Spleen (tissue), 13 donors: ENCODE measurements at regions of chr17 and their contacts with region 1.

Region 1: DNA sequence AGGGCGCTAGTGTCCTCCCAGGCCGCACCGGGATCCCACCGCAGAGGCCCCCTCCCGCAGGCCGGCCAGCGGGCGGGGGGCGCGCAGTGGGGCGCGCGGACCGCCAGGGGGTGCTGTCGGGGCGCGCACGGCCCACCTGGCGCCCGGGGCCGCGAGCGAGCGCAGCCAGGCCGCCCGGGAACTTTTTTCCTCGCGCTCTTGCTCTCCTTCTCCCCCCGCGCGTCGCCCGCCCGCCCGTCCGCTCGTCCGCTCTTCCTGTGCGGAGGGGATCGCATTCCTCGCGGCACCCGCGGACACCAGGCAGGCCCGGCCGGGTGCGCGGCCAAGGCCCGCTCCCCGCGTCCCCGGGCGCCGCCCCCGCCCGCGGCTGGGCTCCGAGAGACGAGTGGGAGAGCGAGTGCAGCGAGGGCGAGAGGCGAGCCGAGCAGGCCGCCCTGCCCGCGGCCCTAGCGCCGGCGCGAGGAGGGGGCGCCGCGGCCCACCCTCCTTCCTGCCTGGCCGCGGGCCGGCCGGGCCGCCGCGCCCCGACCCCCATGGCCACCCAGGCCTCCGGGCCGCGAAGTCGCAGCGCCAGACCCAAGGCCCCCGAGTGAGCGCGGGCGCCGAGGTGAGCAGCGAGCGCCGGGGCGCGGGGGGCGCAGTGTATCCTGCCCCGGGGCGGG is at the start of gene RAI1:
- DNase-seq: peak; percentile 94
- H3K4me3 ChIP-seq: peak within 1 kb of the TSS; percentile 66 to 93 (median 81)
- H3K27ac ChIP-seq: peak within 1 kb of the TSS; percentile 90 to 96 (median 94)
- H3K4me1 ChIP-seq: peaks cover 19 to 70% (median 48%) of the 10 kb centered on the region in 6 donors
- H3K27me3 ChIP-seq: no peaks in the 10 kb centered on the region
- CTCF ChIP-seq: peak in 8 of 11 experiments; percentile 46 to 95 (median 84)
- POLR2A ChIP-seq: no peak
- total RNA-seq, gene RAI1: 28.9 to 61.9 (median 40.3) TPM

Region 2: GRCh38 chr17:17723354-17724261 is 42.3 kb after region 1 on chr17:
- intact Hi-C with region 1: loop called (anchors 5 kb)
- DNase-seq: no peak
- H3K4me3 ChIP-seq: peak overlapping the region; percentile 45 to 81 (median 60)
- H3K27ac ChIP-seq: peak overlapping the region; percentile 14 to 88 (median 82)
- H3K4me1 ChIP-seq: peaks cover 29 to 83% (median 64%) of the 10 kb centered on the region in 6 donors
- H3K27me3 ChIP-seq: peaks cover 0 to 39% (median 9%) of the 10 kb centered on the region in 7 donors
- CTCF ChIP-seq: no peak
- POLR2A ChIP-seq: no peak

Region 3: DNA sequence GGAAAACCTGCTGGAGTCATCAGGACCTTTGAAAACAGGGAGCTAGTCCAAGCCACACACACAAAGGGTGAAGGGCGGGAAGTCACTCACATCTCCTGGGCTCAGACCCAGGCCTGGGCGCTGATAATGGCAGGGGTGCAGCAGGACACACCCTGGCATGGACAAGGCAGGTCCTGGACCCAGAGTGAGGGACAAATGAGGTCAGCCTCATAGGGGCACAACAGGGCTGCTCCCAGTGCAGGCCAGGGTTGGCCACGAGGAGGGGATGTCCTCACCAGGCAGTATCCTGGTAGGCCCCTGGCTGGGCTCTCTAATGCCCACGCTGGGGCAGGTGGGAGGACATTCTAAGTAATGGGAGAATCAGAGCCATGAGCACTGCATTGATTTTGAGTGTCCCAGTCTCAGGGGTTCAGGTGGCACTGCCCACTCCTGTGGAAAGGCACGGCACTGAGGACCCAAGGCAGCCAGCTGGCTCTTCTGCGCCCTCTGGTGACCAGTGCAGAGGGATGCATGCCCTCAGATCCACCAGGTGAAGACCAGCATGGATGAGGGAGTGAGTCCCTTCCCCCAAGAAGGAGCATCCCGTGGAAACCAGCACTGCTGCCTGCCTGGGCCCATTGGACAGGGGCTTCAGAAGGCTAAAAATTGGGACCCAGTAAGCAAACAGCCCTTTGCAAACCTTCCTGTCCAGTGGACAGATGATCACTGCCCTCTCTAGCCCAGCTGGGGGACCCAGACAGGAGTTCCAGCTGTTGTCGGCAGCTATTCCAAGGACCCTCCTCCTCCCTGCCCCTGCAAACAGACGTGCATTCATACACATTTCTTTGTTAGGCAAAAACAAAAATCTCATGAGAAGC is 178.8 kb after region 1 on chr17:
- intact Hi-C with region 1: loop called (anchors 2 kb)
- DNase-seq: peak; percentile 92
- H3K4me3 ChIP-seq: no peak overlapping the region
- H3K27ac ChIP-seq: no peak overlapping the region
- H3K4me1 ChIP-seq: peaks cover 0 to 26% (median 7%) of the 10 kb centered on the region in 6 donors
- H3K27me3 ChIP-seq: no peaks in the 10 kb centered on the region
- CTCF ChIP-seq: peak; percentile 93 to 98 (median 97)
- POLR2A ChIP-seq: no peak

Region 4: GRCh38 chr17:18038861-18039534 is 357.7 kb after region 1 on chr17 and contains the starts of genes ATPAF2 and GID4:
- intact Hi-C with region 1: loop called (anchors 10 kb)
- DNase-seq: peak; percentile 100
- H3K4me3 ChIP-seq: peak within 1 kb of the TSS; percentile 74 to 98 (median 94)
- H3K27ac ChIP-seq: peak within 1 kb of the TSS; percentile 50 to 93 (median 87)
- H3K4me1 ChIP-seq: peaks cover 24 to 86% (median 47%) of the 10 kb centered on the region in 6 donors
- H3K27me3 ChIP-seq: no peaks in the 10 kb centered on the region
- CTCF ChIP-seq: peak in 2 of 11 experiments; percentile 29 to 37
- POLR2A ChIP-seq: peak in 2 of 3 donors; percentile 27 to 49
- total RNA-seq, gene ATPAF2: 25.2 to 57.1 (median 35.5) TPM
- total RNA-seq, gene GID4: 5.7 to 11.5 (median 9.4) TPM